Dendritic cell treated with granulocyte-macrophage colony-stimulating factor and Interleukin-4, amounts not matched to agents 40 ng/mL and 50 ng/mL, for 4 days (primary cell): ENCODE measurements at regions of chrX and their contacts with region 1.

Region 1: GRCh38 chrX:143664302-143664701 is 28.4 kb upstream of the SLITRK4 start:
- H3K4me3 Mint-ChIP-seq: no peak overlapping the region
- H3K27ac Mint-ChIP-seq: no peak overlapping the region
- H3K4me1 Mint-ChIP-seq: no peaks in the 10 kb centered on the region
- H3K27me3 Mint-ChIP-seq: no peaks in the 10 kb centered on the region

Region 2: GRCh38 chrX:144616317-144616716 is 952.0 kb after region 1 on chrX:
- intact Hi-C with region 1: no loop called
- H3K4me3 Mint-ChIP-seq: no peak overlapping the region
- H3K27ac Mint-ChIP-seq: no peak overlapping the region
- H3K4me1 Mint-ChIP-seq: no peaks in the 10 kb centered on the region
- H3K27me3 Mint-ChIP-seq: no peaks in the 10 kb centered on the region

Region 3: GRCh38 chrX:145190801-145191389 is 1526.6 kb after region 1 on chrX:
- intact Hi-C with region 1: loop called (anchors 10 kb)
- H3K4me3 Mint-ChIP-seq: no peak overlapping the region
- H3K27ac Mint-ChIP-seq: no peak overlapping the region
- H3K4me1 Mint-ChIP-seq: no peaks in the 10 kb centered on the region
- H3K27me3 Mint-ChIP-seq: no peaks in the 10 kb centered on the region